PC-9 (cell line): ENCODE measurements at regions of chr1 and their contacts with region 1.

Region 1: GRCh38 chr1:26408604-26409003 is 2.0 kb upstream of the LIN28A start:
- DNase-seq: peak; percentile 46 to 71
- H3K4me3 ChIP-seq: no peak overlapping the region
- H3K27ac ChIP-seq: no peak overlapping the region
- H3K4me1 ChIP-seq: peaks cover 12% of the 10 kb centered on the region
- H3K27me3 ChIP-seq: no peaks in the 10 kb centered on the region
- CTCF ChIP-seq: no peak

Region 2: GRCh38 chr1:25190260-25190659 is 1218.3 kb before region 1 on chr1:
- CTCF ChIA-PET with region 1: no interaction called
- POLR2A ChIA-PET with region 1: interaction called, 14 read pairs
- intact Hi-C with region 1: no loop called
- DNase-seq: no peak
- H3K4me3 ChIP-seq: no peak overlapping the region
- H3K27ac ChIP-seq: no peak overlapping the region
- H3K4me1 ChIP-seq: no peaks in the 10 kb centered on the region
- H3K27me3 ChIP-seq: peaks cover 4% of the 10 kb centered on the region; the same call in 1 of the 2 replicates
- CTCF ChIP-seq: no peak

Region 3: GRCh38 chr1:26300586-26301275 is 107.9 kb before region 1 on chr1:
- CTCF ChIA-PET with region 1: interaction called, 17 read pairs
- POLR2A ChIA-PET with region 1: interaction called, 6 read pairs
- intact Hi-C with region 1: no loop called
- DNase-seq: peak in 1 of 2 experiments; percentile 68
- H3K4me3 ChIP-seq: no peak overlapping the region
- H3K27ac ChIP-seq: no peak overlapping the region
- H3K4me1 ChIP-seq: peaks cover 44% of the 10 kb centered on the region
- H3K27me3 ChIP-seq: no peaks in the 10 kb centered on the region
- CTCF ChIP-seq: no peak